ENCODE measurements at regions of chr1 and their contacts with region 1.

Region 1: DNA sequence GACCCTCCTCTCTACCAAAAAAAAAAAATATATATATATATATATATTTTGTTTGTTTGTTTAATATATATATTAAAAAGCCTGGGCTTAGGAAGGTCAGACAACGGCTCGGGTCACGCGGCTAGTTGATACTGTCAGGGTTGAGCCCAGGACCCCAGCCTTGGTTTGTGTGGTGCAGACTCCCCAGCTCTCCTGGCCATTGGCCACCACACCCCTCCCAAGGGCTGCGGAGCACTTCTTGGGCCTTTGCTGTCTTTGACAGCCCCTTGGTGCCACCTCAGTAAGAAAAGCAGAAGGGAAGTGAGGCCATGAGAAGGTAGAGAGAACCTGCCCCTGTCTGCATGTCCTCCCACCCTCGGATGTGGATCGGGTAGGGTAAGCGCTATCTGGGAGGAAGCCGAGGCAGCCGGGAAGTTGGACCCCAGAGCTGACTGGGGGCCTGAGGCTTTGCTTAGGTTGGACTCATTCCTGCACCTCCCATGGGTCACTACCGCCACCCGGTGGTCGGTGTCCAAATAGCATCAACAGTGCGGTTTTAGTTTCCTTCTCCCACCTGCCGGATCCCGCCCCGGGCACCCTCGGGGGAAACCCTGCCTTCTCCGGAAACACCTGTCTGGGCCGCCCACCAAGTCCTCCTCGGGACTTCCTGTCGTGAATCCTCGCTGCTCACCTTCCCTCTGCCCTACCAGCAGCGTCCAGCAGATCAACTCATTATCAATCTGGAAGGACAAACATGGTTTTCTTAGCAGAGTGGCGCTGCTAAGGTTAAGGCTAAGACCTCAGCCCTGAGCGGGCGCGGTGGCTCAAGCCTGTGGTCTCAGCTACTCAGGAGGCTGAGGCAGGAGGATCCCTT is 29.8 kb upstream of the GNPAT start:
- DNase-seq: peak; percentile 75 to 93
- ATAC-seq: peak; percentile 85
- H3K4me3 ChIP-seq: no peak overlapping the region
- H3K27ac ChIP-seq: no peak overlapping the region
- H3K4me1 ChIP-seq: no peaks in the 10 kb centered on the region
- H3K27me3 ChIP-seq: no peaks in the 10 kb centered on the region

Region 2: GRCh38 chr1:230797942-230798418 is 413.3 kb before region 1 on chr1:
- intact Hi-C with region 1: loop called (anchors 2 kb)
- DNase-seq: peak in 1 of 2 donors; percentile 70
- ATAC-seq: peak; percentile 83
- H3K4me3 ChIP-seq: no peak overlapping the region
- H3K27ac ChIP-seq: no peak overlapping the region
- H3K4me1 ChIP-seq: no peaks in the 10 kb centered on the region
- H3K27me3 ChIP-seq: no peaks in the 10 kb centered on the region

Region 3: GRCh38 chr1:230917284-230918135 is 293.7 kb before region 1 on chr1:
- intact Hi-C with region 1: loop called (anchors 10 kb)
- DNase-seq: peak; percentile 78 to 83
- ATAC-seq: peak; percentile 66
- H3K4me3 ChIP-seq: no peak overlapping the region
- H3K27ac ChIP-seq: no peak overlapping the region
- H3K4me1 ChIP-seq: no peaks in the 10 kb centered on the region
- H3K27me3 ChIP-seq: no peaks in the 10 kb centered on the region

Region 4: DNA sequence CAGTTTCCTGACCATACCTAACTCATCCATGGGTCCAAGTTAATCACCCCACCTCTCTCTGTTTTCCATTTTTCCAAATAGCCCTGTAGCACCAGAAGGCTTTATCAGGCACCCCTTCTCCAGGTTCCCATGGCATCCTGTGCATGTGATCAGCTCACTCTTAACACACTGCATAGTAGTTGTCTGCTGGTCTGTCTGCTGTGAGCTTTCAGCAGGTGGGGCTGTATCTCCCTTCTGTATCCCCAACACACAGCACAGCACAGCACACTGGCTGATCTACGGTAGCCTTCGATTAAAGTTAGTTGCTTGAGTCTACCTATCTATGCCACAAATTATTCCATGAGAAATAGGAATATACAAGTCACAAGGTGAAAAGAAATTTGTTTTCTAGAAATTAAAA is 288.6 kb before region 1 on chr1:
- intact Hi-C with region 1: loop called (anchors 10 kb)
- DNase-seq: no peak
- ATAC-seq: no peak
- H3K4me3 ChIP-seq: no peak overlapping the region
- H3K27ac ChIP-seq: no peak overlapping the region
- H3K4me1 ChIP-seq: no peaks in the 10 kb centered on the region
- H3K27me3 ChIP-seq: no peaks in the 10 kb centered on the region

Region 5: DNA sequence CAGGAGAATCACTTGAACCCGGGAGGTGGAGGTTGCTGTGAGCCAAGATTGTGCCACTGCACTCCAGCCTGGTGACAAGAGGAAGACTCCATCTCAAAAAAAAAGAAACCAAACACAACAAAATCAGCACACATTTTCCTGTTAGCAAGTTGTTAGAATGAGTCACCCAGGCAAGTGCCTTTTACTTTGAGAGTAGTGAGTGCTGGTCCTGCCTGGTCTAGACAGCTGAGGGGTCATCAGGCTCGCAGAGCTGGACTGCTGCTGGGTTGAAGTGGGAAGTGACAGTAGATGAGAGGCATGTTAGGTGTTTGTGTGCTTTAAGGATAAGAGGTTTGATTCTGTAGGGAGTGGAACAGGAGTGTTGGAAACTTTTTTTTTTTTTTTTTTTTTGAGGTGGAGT is 61.6 kb after region 1 on chr1:
- intact Hi-C with region 1: no loop called
- DNase-seq: no peak
- ATAC-seq: no peak
- H3K4me3 ChIP-seq: no peak overlapping the region
- H3K27ac ChIP-seq: no peak overlapping the region
- H3K4me1 ChIP-seq: no peaks in the 10 kb centered on the region
- H3K27me3 ChIP-seq: no peaks in the 10 kb centered on the region